ENCODE measurements at regions of chr1 and their contacts with region 1.

Region 1: DNA sequence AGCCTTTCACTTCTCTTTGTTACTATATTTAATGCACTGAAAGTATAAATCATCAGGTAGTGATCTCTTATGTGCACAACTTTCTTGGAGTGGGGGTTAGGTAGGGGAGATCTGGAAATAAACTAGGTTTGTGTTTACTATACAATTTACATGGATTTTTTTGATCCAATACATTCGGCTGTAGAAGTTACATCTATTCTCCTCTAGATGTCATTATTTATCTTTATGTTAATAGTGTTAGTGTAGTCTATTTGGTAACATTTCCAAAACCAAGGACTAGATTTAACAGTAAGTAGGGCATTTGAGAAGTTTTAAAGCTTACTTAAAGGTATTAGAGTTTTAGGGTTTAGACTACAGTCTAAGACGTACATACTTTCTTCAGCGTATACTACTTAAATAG is 5.4 kb downstream of the VPS45 start:
- DNase-seq: no peak
- ATAC-seq: no peak
- H3K4me3 ChIP-seq: no peak overlapping the region
- H3K27ac ChIP-seq: no peak overlapping the region
- H3K4me1 ChIP-seq: peaks cover 9% of the 10 kb centered on the region
- H3K27me3 ChIP-seq: no peaks in the 10 kb centered on the region
- CTCF ChIP-seq: peak in 2 of 7 experiments; percentile 19 to 35
- POLR2A ChIP-seq: no peak

Region 2: GRCh38 chr1:150162862-150163706 is 90.1 kb after region 1 on chr1:
- intact Hi-C with region 1: loop called (anchors 10 kb)
- DNase-seq: peak; percentile 49 to 85 (median 71)
- ATAC-seq: peak; percentile 83
- H3K4me3 ChIP-seq: no peak overlapping the region
- H3K27ac ChIP-seq: peak overlapping the region; percentile 33 to 71 (median 52)
- H3K4me1 ChIP-seq: peaks cover 11% of the 10 kb centered on the region
- H3K27me3 ChIP-seq: no peaks in the 10 kb centered on the region
- CTCF ChIP-seq: peak in 2 of 7 experiments; percentile 7 to 20
- POLR2A ChIP-seq: peak in 2 of 3 donors; percentile 60 to 77

Measured in body of pancreas (tissue), 4 donors.